Right ventricle myocardium superior (tissue), 1 donor: ENCODE measurements at regions of chr13 and their contacts with region 1.

Region 1: DNA sequence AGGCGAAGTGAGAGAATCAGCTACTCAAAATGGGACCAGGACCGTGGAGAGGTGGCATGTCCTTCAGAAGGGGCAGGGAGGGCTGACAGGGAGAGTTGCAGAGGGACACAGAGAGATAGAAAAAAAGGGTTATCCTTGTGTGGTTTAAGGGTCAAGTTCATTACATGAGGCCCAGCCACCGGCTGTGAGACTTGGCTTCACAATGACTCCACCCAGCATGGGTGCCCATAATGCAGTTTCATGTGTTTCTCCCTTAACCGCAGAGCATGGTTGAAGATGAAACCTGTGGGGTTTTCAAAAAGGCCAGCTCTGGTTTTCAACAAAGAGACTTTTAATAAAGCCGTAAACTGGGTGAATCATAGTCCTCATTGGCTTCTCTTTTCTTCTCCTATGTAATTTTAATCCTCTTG is 164.6 kb downstream of the KLF5 start:
- DNase-seq: no peak
- ATAC-seq: no peak

Region 2: DNA sequence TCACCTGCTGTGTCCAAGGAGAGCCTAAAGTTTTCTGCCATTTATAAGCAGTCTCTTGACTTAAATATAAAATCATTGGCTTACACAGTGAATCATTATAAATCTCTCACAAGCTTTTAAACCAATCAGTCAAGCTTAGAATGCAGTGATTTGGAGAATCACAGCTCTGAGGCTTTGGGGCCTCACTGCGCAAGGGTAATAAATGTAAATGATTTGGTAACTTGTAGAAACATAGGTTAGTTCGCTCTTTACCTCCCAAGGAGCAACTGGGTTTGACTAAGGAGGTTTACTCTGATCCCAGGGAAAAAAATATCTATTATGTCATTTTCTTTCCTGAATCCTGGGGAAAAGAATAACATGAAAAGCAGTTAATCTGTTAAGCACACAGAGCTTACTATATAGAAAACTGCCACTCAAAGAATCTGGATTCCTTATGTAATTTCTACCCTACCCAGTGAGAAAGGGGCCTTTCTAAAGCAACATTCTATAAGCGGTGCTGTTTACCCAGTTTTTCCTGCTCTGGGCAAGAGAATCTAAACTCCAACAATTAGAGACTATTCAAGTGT is 624.1 kb before region 1 on chr13:
- intact Hi-C with region 1: loop called (anchors 10 kb)
- DNase-seq: no peak
- ATAC-seq: no peak

Region 3: GRCh38 chr13:72839831-72840426 is 383.4 kb before region 1 on chr13:
- intact Hi-C with region 1: no loop called
- DNase-seq: no peak
- ATAC-seq: peak; percentile 77